Activated naive CD4-positive, alpha-beta T cell treated with anti-CD3 and anti-CD28 coated beads for 36 hours (primary cell): ENCODE measurements at regions of chr5 and their contacts with region 1.

Region 1: GRCh38 chr5:96823900-96824351 is 16.2 kb upstream of the ERAP1 start:
- DNase-seq: peak; percentile 20
- H3K4me3 Mint-ChIP-seq: no peak overlapping the region
- H3K27ac Mint-ChIP-seq: no peak overlapping the region
- H3K4me1 Mint-ChIP-seq: peaks cover 40% of the 10 kb centered on the region
- H3K27me3 Mint-ChIP-seq: no peaks in the 10 kb centered on the region

Region 2: GRCh38 chr5:96714951-96715451 is 108.9 kb before region 1 on chr5:
- CTCF ChIA-PET with region 1: no interaction called
- intact Hi-C with region 1: no loop called
- DNase-seq: peak; percentile 48
- H3K4me3 Mint-ChIP-seq: no peak overlapping the region
- H3K27ac Mint-ChIP-seq: no peak overlapping the region
- H3K4me1 Mint-ChIP-seq: peaks cover 20% of the 10 kb centered on the region
- H3K27me3 Mint-ChIP-seq: no peaks in the 10 kb centered on the region

Region 3: GRCh38 chr5:96794757-96795156 is 29.2 kb before region 1 on chr5:
- CTCF ChIA-PET with region 1: interaction called, 3 read pairs
- intact Hi-C with region 1: loop called (anchors 1 kb)
- DNase-seq: peak; percentile 84
- H3K4me3 Mint-ChIP-seq: no peak overlapping the region
- H3K27ac Mint-ChIP-seq: peak overlapping the region; percentile 67
- H3K4me1 Mint-ChIP-seq: peaks cover 42% of the 10 kb centered on the region
- H3K27me3 Mint-ChIP-seq: no peaks in the 10 kb centered on the region